Activated CD8-positive, alpha-beta T cell treated with anti-CD3 and anti-CD28 coated beads, Interleukin-2, amount 10 ng/mL, durations not matched to agents 7 days and 5 days (primary cell): ENCODE measurements at regions of chr7 and their contacts with region 1.

Region 1: GRCh38 chr7:37201003-37201875 is 247.4 kb downstream of the ELMO1 start:
- DNase-seq: peak; percentile 66
- ATAC-seq: peak; percentile 45
- H3K4me3 Mint-ChIP-seq: no peak overlapping the region
- H3K27ac Mint-ChIP-seq: no peak overlapping the region
- H3K4me1 Mint-ChIP-seq: peaks cover 2% of the 10 kb centered on the region
- H3K27me3 Mint-ChIP-seq: no peaks in the 10 kb centered on the region

Region 2: DNA sequence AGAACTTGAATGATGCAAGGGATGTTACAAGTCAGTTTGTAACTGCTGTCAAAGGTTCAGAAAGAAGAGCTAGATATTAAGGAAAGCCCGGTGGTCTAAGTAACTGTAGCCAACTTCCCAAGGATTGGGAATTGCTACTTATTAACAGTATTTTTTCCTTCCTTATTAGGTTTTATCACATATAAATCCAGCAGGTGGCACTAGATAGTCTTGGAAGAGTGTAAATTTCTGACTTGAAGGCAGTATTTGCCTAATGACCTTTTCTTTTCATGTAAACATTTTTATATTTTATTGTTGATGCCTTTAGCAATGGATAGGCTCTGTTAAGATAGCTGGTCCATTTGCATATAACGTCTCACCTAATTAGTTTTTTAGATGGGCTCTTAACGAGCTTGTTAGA is 760.4 kb before region 1 on chr7:
- CTCF ChIA-PET with region 1: interaction called, 12 read pairs
- POLR2A ChIA-PET with region 1: no interaction called
- DNase-seq: no peak
- ATAC-seq: no peak
- H3K4me3 Mint-ChIP-seq: no peak overlapping the region
- H3K27ac Mint-ChIP-seq: no peak overlapping the region
- H3K4me1 Mint-ChIP-seq: no peaks in the 10 kb centered on the region
- H3K27me3 Mint-ChIP-seq: no peaks in the 10 kb centered on the region

Region 3: GRCh38 chr7:36473454-36474282 is 727.6 kb before region 1 on chr7:
- CTCF ChIA-PET with region 1: interaction called, 12 read pairs
- POLR2A ChIA-PET with region 1: no interaction called
- DNase-seq: peak; percentile 56
- ATAC-seq: peak; percentile 38
- H3K4me3 Mint-ChIP-seq: no peak overlapping the region
- H3K27ac Mint-ChIP-seq: peak overlapping the region; percentile 50
- H3K4me1 Mint-ChIP-seq: peaks cover 27% of the 10 kb centered on the region
- H3K27me3 Mint-ChIP-seq: no peaks in the 10 kb centered on the region

Region 4: GRCh38 chr7:36487756-36488336 is 713.4 kb before region 1 on chr7:
- CTCF ChIA-PET with region 1: interaction called, 40 read pairs
- POLR2A ChIA-PET with region 1: no interaction called
- DNase-seq: peak; percentile 68
- ATAC-seq: peak; percentile 70
- H3K4me3 Mint-ChIP-seq: no peak overlapping the region
- H3K27ac Mint-ChIP-seq: no peak overlapping the region
- H3K4me1 Mint-ChIP-seq: peaks cover 3% of the 10 kb centered on the region
- H3K27me3 Mint-ChIP-seq: peaks cover 8% of the 10 kb centered on the region

Region 5: DNA sequence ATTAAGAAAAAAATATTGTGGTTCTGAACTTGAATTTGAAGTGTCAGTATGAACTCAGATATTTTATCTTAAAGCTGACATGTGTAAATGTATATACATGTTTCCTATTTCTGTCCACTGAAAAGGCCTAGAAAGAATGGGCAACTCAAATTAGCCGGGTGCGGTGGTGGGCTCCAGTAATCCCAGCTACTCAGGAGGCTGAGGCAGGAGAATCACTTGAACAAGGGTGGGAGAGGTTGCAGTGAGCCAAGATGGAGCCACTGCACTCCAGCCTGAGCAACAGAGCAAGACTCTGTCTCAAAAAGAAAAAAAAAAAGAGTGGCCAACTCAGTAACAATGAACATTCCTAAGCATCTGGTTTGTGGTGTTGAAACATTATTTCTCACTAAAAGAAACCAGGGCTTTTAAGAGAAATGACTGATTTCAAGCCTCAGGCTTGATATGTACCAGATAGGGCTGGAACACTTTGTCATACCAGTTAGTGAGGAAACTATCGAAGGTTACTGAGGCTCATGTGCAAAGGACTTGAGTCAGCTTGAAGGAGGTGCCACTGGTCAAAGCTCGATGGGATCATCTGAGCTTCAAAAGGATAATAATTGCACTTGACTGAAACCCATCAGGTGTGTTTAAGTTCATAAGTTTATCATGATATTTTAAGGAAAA is 517.4 kb before region 1 on chr7:
- CTCF ChIA-PET with region 1: interaction called, 13 read pairs
- POLR2A ChIA-PET with region 1: no interaction called
- DNase-seq: no peak
- ATAC-seq: no peak
- H3K4me3 Mint-ChIP-seq: no peak overlapping the region
- H3K27ac Mint-ChIP-seq: peak overlapping the region; percentile 28
- H3K4me1 Mint-ChIP-seq: peaks cover 69% of the 10 kb centered on the region
- H3K27me3 Mint-ChIP-seq: no peaks in the 10 kb centered on the region

Region 6: GRCh38 chr7:37216156-37216852 is 15.1 kb after region 1 on chr7:
- CTCF ChIA-PET with region 1: interaction called, 12 read pairs
- POLR2A ChIA-PET with region 1: no interaction called
- DNase-seq: no peak
- ATAC-seq: no peak
- H3K4me3 Mint-ChIP-seq: no peak overlapping the region
- H3K27ac Mint-ChIP-seq: no peak overlapping the region
- H3K4me1 Mint-ChIP-seq: peaks cover 12% of the 10 kb centered on the region
- H3K27me3 Mint-ChIP-seq: no peaks in the 10 kb centered on the region

Region 7: GRCh38 chr7:37234928-37235327 is 33.7 kb after region 1 on chr7:
- CTCF ChIA-PET with region 1: no interaction called
- POLR2A ChIA-PET with region 1: no interaction called
- DNase-seq: peak; percentile 31
- ATAC-seq: no peak
- H3K4me3 Mint-ChIP-seq: no peak overlapping the region
- H3K27ac Mint-ChIP-seq: no peak overlapping the region
- H3K4me1 Mint-ChIP-seq: peaks cover 4% of the 10 kb centered on the region
- H3K27me3 Mint-ChIP-seq: no peaks in the 10 kb centered on the region